Right ventricle myocardium superior (tissue), 1 donor: ENCODE measurements at regions of chr13 and their contacts with region 1.

Region 1: DNA sequence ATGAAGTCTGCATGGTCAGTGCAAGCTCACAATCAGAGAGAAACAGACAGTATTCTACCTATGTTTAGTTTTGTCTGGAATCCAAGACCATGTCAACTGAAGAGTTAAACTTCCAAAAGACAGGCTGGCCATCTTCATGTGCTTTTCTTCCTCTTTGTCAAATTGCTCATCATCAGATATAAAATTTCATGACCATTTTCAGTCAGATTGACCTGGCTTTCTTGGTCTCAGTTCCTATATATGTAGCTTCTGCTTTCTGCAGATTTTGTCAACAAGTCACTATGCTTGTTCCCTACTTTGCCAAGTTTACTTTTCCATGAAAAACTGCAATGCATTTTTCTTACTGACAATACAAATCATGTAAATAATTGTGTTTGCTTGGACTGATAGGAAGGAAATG is 13.9 kb downstream of the SLC46A3 start:
- DNase-seq: no peak
- ATAC-seq: no peak

Region 2: DNA sequence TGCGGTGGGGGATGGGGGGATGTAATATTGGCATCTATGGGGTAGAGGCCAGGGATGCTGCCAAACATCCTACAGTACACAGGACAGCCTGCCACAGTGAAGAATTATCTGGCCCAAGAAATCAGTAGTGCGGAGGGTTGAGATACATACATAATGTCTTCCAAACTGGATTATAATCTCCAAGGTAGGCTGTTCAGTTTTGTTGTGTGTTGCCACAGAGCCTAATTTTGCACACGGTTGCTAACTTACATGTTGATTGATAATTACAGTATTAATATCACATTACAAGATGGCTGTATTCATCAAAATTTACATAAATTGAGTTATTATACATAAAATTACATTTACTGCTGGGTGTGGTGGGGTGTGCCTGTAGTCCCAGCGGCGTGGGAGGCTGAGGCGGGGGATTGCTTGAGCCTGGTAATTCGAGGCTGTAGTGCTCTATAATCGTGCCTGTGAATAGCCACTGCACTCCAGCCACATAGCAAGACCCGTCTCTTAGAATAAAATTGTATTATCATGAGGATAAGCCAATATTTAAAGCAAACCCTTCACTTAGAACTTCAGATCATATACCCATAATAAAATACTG is 37.9 kb before region 1 on chr13:
- intact Hi-C with region 1: loop called (anchors 5 kb)
- DNase-seq: no peak
- ATAC-seq: no peak